Activated naive CD4-positive, alpha-beta T cell treated with anti-CD3 and anti-CD28 coated beads for 36 hours (primary cell): ENCODE measurements at regions of chr5 and their contacts with region 1.

Region 1: DNA sequence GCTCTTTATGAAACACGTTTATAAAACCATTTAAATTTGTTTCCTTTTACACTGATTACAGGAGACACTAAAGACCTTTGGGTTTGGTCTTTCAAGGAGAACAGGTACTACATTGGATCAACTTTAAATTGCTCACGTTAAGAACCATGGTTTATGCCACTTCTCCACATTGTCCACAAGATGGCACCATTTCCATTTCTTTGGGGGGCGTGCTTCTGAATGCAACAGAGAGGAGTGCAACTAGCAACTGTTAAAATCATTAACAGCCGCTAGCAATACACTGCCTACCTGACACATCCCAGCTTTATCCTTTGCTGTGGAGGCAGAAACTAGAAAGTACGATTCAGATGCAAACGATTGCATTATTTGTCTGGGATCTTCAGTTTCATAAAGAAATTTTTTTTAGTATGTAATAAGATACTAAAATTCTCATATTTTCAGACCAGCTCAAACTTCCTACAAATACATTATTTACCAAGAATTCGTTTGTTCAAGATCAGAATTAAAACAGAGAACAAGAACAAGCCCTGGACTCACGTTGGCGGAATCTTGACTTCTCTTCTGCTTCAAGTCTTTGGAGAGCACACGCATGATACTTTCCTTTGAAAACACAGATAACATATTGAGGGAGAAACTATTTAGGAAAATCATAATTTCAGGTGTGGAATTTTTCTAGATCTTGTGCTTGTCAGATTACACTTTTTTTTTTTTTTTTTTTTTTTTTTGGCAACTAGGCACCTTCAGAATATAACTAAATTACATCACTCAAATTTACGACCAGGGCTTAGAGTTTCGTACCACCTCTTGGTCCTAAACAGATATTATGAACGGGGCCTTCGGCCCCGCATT is 702 bp downstream of the CDC20B start:
- DNase-seq: peak; percentile 79
- H3K4me3 Mint-ChIP-seq: peak overlapping the region; percentile 81
- H3K27ac Mint-ChIP-seq: no peak overlapping the region
- H3K4me1 Mint-ChIP-seq: peaks cover 36% of the 10 kb centered on the region
- H3K27me3 Mint-ChIP-seq: peaks cover 48% of the 10 kb centered on the region

Region 2: GRCh38 chr5:55191165-55191564 is 18.9 kb after region 1 on chr5:
- CTCF ChIA-PET with region 1: interaction called, 3 read pairs
- intact Hi-C with region 1: loop called (anchors 2 kb)
- DNase-seq: no peak
- H3K4me3 Mint-ChIP-seq: no peak overlapping the region
- H3K27ac Mint-ChIP-seq: no peak overlapping the region
- H3K4me1 Mint-ChIP-seq: no peaks in the 10 kb centered on the region
- H3K27me3 Mint-ChIP-seq: peaks cover 36% of the 10 kb centered on the region

Region 3: DNA sequence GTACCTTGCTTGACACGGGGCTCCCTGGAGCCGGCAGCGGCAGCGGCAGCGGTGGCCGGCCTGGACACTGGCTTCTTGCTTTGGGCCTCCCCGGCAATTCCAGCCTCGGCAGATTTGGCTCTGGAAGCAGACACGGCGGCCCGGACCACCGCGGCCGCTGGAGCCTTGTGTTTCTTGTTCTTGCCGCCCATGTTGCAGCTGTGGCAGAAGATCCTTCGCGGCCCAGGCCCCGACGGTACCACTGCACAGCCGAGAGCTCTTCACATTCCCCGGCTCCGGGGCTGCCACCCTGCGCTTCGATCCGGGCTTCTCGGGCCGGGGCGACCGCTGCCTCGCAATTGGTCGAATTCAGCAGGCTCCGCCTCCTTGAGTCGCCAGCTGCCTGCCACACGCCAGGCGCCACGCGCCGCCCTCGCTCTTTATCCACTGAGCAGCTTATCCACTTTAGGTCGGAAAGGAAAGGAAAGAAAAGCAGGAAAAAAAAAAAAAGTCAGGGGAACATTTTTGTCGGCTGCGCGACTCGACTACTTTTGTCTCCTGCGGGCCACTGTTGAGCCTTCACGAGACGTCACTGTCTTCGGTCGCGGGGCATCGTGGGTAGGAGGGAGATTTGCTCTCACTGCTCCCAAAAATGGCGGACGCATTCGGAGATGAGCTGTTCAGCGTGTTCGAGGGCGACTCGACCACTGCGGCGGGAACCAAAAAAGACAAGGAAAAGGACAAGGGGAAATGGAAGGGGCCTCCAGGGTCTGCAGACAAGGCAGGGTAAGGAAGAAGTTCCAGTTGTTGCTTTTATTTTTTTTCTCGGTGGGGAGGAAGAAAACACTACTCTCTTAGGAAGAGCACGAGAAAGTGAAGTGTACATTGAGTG is 135.3 kb after region 1 on chr5 and contains the starts of genes DHX29 and MTREX:
- CTCF ChIA-PET with region 1: interaction called, 4 read pairs
- intact Hi-C with region 1: loop called (anchors 1 kb)
- DNase-seq: peak; percentile 94
- H3K4me3 Mint-ChIP-seq: no peak within 1 kb of the TSS
- H3K27ac Mint-ChIP-seq: no peak within 1 kb of the TSS
- H3K4me1 Mint-ChIP-seq: peaks cover 33% of the 10 kb centered on the region
- H3K27me3 Mint-ChIP-seq: no peaks in the 10 kb centered on the region
- total RNA-seq, gene DHX29: 11.0 to 11.1 TPM
- total RNA-seq, gene MTREX: 76.1 to 79.7 TPM

Region 4: GRCh38 chr5:55421074-55421529 is 248.8 kb after region 1 on chr5:
- CTCF ChIA-PET with region 1: no interaction called
- intact Hi-C with region 1: loop called (anchors 1 kb)
- DNase-seq: peak; percentile 49
- H3K4me3 Mint-ChIP-seq: no peak overlapping the region
- H3K27ac Mint-ChIP-seq: no peak overlapping the region
- H3K4me1 Mint-ChIP-seq: peaks cover 33% of the 10 kb centered on the region
- H3K27me3 Mint-ChIP-seq: no peaks in the 10 kb centered on the region

Region 5: GRCh38 chr5:55691265-55692105 is 519.2 kb after region 1 on chr5:
- CTCF ChIA-PET with region 1: interaction called, 14 read pairs
- intact Hi-C with region 1: loop called (anchors 1 kb)
- DNase-seq: no peak
- H3K4me3 Mint-ChIP-seq: no peak overlapping the region
- H3K27ac Mint-ChIP-seq: no peak overlapping the region
- H3K4me1 Mint-ChIP-seq: peaks cover 3% of the 10 kb centered on the region
- H3K27me3 Mint-ChIP-seq: no peaks in the 10 kb centered on the region

Region 6: DNA sequence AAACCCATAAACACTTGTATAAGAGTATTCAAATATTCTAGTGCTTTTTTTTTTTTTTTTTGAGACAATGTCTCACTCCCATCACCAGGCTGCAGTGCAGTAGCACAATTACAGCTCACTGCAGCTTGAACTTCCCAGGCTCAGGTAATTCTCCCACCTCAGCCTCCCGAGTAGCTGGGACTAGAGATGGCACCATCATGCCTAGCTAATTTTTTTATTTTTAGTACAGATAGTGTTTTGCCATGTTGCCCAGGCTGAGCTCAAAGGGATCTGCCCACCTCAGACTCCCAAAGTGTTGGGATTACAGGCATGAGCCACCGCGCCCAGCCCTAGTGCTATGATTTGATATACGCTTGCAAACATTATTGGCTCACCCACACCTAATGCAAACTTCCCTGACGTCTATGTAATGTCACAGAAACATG is 810.7 kb after region 1 on chr5:
- CTCF ChIA-PET with region 1: no interaction called
- intact Hi-C with region 1: loop called (anchors 5 kb)
- DNase-seq: peak; percentile 53
- H3K4me3 Mint-ChIP-seq: peak overlapping the region; percentile 61
- H3K27ac Mint-ChIP-seq: peak overlapping the region; percentile 87
- H3K4me1 Mint-ChIP-seq: peaks cover 82% of the 10 kb centered on the region
- H3K27me3 Mint-ChIP-seq: no peaks in the 10 kb centered on the region

Region 7: GRCh38 chr5:56774957-56775356 is 1602.7 kb after region 1 on chr5:
- CTCF ChIA-PET with region 1: no interaction called
- intact Hi-C with region 1: no loop called
- DNase-seq: no peak
- H3K4me3 Mint-ChIP-seq: no peak overlapping the region
- H3K27ac Mint-ChIP-seq: no peak overlapping the region
- H3K4me1 Mint-ChIP-seq: no peaks in the 10 kb centered on the region
- H3K27me3 Mint-ChIP-seq: no peaks in the 10 kb centered on the region